ENCODE measurements at regions of chr3 and their contacts with region 1.

Region 1: GRCh38 chr3:61956236-61956635 is 394.9 kb downstream of the PTPRG start:
- DNase-seq: no peak

Region 2: GRCh38 chr3:61892891-61893290 is 63.3 kb before region 1 on chr3:
- intact Hi-C with region 1: loop called in 1 of 2 experiments (anchors 2 kb)
- DNase-seq: no peak